Activated CD8-positive, alpha-beta T cell treated with anti-CD3 and anti-CD28 coated beads for 36 hours (primary cell): ENCODE measurements at regions of chr1 and their contacts with region 1.

Region 1: DNA sequence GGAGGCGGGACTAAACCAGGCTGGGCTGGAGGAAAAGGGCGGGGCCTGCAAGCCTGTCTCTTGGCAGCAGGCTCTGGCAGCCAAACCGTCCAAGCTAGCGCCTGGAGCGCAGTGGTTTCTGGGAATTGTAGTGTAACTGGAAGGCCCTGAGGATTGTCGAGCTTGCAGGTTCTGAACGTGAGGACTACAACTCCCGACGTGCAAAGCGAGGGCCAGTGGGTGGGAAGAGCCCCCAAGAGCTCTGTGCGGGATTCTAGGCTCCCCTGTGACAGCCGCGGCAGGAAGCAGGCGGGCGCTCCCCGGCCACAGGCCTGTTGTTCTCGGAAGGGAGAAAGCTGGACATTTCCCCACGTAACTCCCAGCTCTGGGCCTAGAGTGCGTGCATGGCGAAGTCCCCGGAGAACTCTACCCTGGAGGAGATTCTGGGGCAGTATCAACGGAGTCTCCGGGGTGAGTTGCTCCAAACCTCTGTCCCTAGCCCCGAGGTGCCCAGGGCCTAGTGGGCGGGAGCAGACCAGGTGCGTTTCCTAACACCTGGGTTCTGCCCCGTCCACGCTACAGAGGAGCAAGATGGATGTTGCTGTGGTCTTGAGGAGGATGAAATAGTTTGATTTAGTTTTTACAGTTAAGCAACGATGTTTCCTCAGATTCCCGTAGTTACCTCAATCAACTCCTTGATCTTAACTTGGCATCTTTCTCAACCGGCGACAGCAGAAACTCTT is at the start of gene SDCCAG8:
- DNase-seq: peak; percentile 98
- ATAC-seq: peak; percentile 83
- H3K4me3 Mint-ChIP-seq: peak within 1 kb of the TSS; percentile 97
- H3K27ac Mint-ChIP-seq: peak within 1 kb of the TSS; percentile 95
- H3K4me1 Mint-ChIP-seq: peaks cover 33% of the 10 kb centered on the region
- H3K27me3 Mint-ChIP-seq: no peaks in the 10 kb centered on the region
- CTCF ChIP-seq: no peak
- total RNA-seq, gene SDCCAG8: 22.4 to 22.6 TPM

Region 2: DNA sequence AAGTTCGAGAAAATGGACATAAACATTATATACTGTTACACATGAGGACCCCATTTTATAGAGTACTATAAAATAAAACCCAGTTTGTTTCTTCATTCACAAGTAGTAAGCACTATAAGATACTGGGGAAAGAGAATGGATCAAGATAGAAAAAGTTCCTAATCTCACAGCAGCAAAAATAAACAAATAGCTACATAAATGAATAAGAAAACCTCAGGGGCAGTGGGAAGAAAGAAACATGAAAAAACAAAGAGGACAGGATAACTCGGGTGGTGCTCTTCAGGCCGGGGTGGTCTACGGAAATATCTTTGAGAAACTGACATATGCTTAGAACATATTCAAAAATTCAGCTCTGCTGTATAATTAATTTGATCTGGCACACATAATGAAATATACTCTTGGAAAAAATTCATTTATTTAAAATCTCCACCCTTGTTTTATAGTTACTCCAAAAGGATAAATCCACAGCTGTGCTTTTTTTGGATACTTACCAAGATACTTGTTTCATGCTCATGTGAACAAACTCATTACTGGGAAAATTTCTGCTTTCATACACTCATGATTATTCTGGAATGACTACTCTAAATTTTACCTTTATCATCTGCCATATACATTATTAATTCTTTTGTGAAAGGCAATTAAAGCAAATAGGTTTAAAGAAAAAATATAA is 20.8 kb before region 1 on chr1:
- CTCF ChIA-PET with region 1: interaction called, 8 read pairs
- POLR2A ChIA-PET with region 1: interaction called, 12 read pairs
- intact Hi-C with region 1: no loop called
- DNase-seq: no peak
- ATAC-seq: no peak
- H3K4me3 Mint-ChIP-seq: no peak overlapping the region
- H3K27ac Mint-ChIP-seq: no peak overlapping the region
- H3K4me1 Mint-ChIP-seq: peaks cover 4% of the 10 kb centered on the region
- H3K27me3 Mint-ChIP-seq: no peaks in the 10 kb centered on the region
- CTCF ChIP-seq: no peak

Region 3: DNA sequence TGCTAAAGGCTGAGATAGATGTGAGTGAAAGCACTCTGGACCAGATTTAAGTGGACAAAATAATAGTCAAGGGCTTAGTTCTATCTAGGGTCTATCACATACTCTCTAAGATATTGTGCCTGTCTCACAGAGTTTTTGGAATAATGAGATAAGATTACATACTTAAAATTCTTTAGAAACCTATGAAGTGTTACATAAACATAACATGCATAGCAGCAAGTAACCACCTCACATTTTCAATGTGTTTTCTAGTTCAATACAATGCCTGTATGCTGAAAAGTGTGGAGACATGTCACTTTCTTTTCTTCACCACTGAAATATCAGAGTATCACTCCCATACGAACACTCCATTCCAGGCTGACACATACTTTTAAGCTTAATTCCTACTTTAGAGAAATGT is 16.0 kb after region 1 on chr1:
- CTCF ChIA-PET with region 1: no interaction called
- POLR2A ChIA-PET with region 1: interaction called, 13 read pairs
- intact Hi-C with region 1: no loop called
- DNase-seq: no peak
- ATAC-seq: no peak
- H3K4me3 Mint-ChIP-seq: no peak overlapping the region
- H3K27ac Mint-ChIP-seq: no peak overlapping the region
- H3K4me1 Mint-ChIP-seq: peaks cover 18% of the 10 kb centered on the region
- H3K27me3 Mint-ChIP-seq: no peaks in the 10 kb centered on the region
- CTCF ChIP-seq: no peak